Activated CD8-positive, alpha-beta memory T cell treated with anti-CD3 and anti-CD28 coated beads, Interleukin-2, amount 10 ng/mL, durations not matched to agents 7 days and 5 days (primary cell): ENCODE measurements at regions of chr2 and their contacts with region 1.

Region 1: GRCh38 chr2:26503231-26503880 is 25.4 kb upstream of the OTOF start:
- DNase-seq: peak; percentile 94
- ATAC-seq: peak; percentile 99
- H3K4me3 Mint-ChIP-seq: peak overlapping the region; percentile 69
- H3K27ac Mint-ChIP-seq: peak overlapping the region; percentile 84
- H3K4me1 Mint-ChIP-seq: peaks cover 14% of the 10 kb centered on the region
- H3K27me3 Mint-ChIP-seq: peaks cover 3% of the 10 kb centered on the region

Region 2: DNA sequence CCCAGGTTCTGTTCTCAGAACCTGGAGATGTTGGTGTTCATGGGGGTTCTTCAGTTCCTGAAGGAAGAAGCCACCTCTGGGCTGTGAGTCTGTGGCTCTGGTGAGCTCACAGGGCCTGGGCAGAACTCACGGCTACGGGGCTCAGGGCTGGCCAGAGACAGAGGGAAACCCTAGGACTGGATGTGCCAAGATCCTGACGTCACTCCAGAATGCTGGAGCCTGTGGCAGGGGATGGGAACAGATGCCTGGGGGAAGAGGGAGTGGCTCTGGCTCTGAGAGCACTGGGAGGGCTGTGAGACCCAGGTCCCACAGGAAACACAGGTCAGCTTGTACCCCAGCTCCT is 25.5 kb before region 1 on chr2 and contains the start of gene OTOF:
- CTCF ChIA-PET with region 1: interaction called, 16 read pairs
- DNase-seq: no peak
- ATAC-seq: peak; percentile 61
- H3K4me3 Mint-ChIP-seq: peak within 1 kb of the TSS; percentile 78
- H3K27ac Mint-ChIP-seq: peak within 1 kb of the TSS; percentile 79
- H3K4me1 Mint-ChIP-seq: peaks cover 14% of the 10 kb centered on the region
- H3K27me3 Mint-ChIP-seq: no peaks in the 10 kb centered on the region
- total RNA-seq, gene OTOF: 35.1 to 115 TPM

Region 3: GRCh38 chr2:26487192-26487591 is 16.2 kb before region 1 on chr2:
- CTCF ChIA-PET with region 1: interaction called, 25 read pairs
- DNase-seq: peak; percentile 67
- ATAC-seq: peak; percentile 60
- H3K4me3 Mint-ChIP-seq: no peak overlapping the region
- H3K27ac Mint-ChIP-seq: peak overlapping the region; percentile 83
- H3K4me1 Mint-ChIP-seq: peaks cover 26% of the 10 kb centered on the region
- H3K27me3 Mint-ChIP-seq: no peaks in the 10 kb centered on the region

Region 4: GRCh38 chr2:26492749-26493515 is 10.4 kb before region 1 on chr2:
- CTCF ChIA-PET with region 1: interaction called, 25 read pairs
- DNase-seq: no peak
- ATAC-seq: peak; percentile 30
- H3K4me3 Mint-ChIP-seq: peak overlapping the region; percentile 75
- H3K27ac Mint-ChIP-seq: no peak overlapping the region
- H3K4me1 Mint-ChIP-seq: peaks cover 21% of the 10 kb centered on the region
- H3K27me3 Mint-ChIP-seq: peaks cover 7% of the 10 kb centered on the region